Heart left ventricle (tissue), 16 donors: ENCODE measurements at regions of chr11 and their contacts with region 1.

Region 1: GRCh38 chr11:46238967-46239800 is 38.3 kb upstream of the CREB3L1 start:
- DNase-seq: peak; percentile 88 to 95 (median 89)
- ATAC-seq: peak; percentile 77 to 87 (median 84)
- H3K4me3 ChIP-seq: peak overlapping the region in 11 of 12 donors; percentile 32 to 67 (median 59)
- H3K27ac ChIP-seq: peak overlapping the region; percentile 84 to 96 (median 92)
- H3K4me1 ChIP-seq: peaks cover 3 to 50% (median 26%) of the 10 kb centered on the region in 12 donors
- H3K27me3 ChIP-seq: no peaks in the 10 kb centered on the region
- CTCF ChIP-seq: peak; percentile 98 to 100 (median 99)
- POLR2A ChIP-seq: peak in 1 of 2 donors; percentile 40

Region 2: GRCh38 chr11:45964911-45965389 is 274.2 kb before region 1 on chr11:
- intact Hi-C with region 1: loop called in 2 of 10 experiments (anchors 10 kb)
- DNase-seq: peak in 4 of 5 donors; percentile 35 to 63 (median 52)
- ATAC-seq: peak; percentile 68 to 93 (median 88)
- H3K4me3 ChIP-seq: no peak overlapping the region
- H3K27ac ChIP-seq: peak overlapping the region in 2 of 12 donors; percentile 13
- H3K4me1 ChIP-seq: peaks cover 0 to 18% (median 4%) of the 10 kb centered on the region in 12 donors
- H3K27me3 ChIP-seq: no peaks in the 10 kb centered on the region
- CTCF ChIP-seq: peak; percentile 86 to 97 (median 89)
- POLR2A ChIP-seq: no peak

Region 3: DNA sequence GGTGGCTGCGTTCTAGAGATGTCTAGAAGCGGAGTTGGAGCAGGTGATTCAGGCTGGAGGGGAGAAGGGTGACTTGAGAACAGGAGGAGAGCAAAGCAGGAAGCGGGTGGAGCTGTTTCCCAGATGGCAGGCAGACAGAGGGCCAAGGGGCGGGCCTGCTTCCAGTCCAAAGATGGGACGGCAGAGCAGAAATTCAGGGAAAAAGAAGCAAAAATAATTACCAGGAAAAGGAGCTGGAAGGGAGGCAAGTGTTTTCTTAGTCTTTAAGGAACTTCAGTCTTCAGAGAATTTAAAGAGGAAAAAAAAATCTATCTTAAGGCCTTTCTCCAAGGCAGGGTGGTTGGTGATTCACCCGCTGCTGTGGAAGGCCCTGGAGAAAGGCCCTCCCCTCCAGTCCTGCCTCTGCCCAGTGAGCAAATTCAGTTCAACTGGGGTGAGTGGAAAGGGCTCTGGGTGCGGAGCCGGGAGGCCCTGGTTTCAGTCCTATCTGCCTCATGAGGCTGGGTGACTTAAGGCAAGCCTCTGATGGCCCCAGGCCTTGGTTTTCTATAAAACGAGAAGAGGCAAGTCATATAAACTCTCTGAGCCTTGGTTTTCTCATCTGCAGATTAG is 33.7 kb after region 1 on chr11:
- intact Hi-C with region 1: loop called in 6 of 10 experiments (anchors 2 to 5 kb)
- DNase-seq: peak; percentile 70 to 83 (median 74)
- ATAC-seq: peak; percentile 39 to 81 (median 70)
- H3K4me3 ChIP-seq: peak overlapping the region in 1 of 12 donors; percentile 1
- H3K27ac ChIP-seq: peak overlapping the region; percentile 66 to 84 (median 79)
- H3K4me1 ChIP-seq: peaks cover 9 to 69% (median 50%) of the 10 kb centered on the region in 12 donors
- H3K27me3 ChIP-seq: peaks cover 0 to 13% (median 0%) of the 10 kb centered on the region in 9 donors
- CTCF ChIP-seq: no peak
- POLR2A ChIP-seq: no peak

Region 4: DNA sequence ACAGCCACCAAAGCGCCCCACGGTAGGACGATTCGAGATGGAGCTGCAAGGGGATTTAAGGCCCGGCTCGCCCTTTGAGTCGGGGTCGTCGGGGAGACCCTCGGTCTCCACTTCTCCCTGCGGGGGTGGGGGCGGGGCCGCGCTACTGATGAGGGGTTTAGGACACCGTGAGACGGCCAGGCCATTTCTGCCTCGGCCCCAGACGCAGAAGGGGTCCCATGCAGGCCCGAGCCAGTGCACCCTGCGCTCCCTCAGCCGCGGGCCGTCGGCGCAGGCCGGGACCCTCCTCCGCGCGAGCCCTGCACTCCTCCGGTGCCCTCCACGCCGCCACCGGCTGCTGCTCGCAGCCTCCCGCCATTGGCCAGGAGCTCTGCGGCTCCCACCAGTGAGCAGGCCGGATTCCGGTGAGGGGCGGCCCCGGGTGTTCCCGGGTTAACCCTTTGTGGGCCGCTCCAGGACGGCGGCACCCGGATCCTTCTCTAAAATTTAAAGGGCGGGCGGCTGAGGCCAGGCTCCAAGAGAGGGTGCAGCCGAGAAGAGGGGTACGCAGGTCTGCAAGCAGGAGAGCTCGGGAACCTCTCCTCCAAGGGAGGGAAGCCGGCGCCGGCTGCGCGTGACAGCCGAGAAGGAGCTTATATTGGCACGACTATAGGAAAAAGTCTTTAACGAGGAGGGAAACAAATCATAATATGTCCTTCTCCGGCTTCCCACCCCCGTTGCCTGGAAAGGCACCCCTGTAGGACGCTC is 56.3 kb after region 1 on chr11:
- intact Hi-C with region 1: loop called in 1 of 10 experiments (anchors 5 kb)
- DNase-seq: peak; percentile 81 to 89 (median 87)
- ATAC-seq: peak; percentile 87 to 94 (median 92)
- H3K4me3 ChIP-seq: peak overlapping the region; percentile 31 to 77 (median 58)
- H3K27ac ChIP-seq: peak overlapping the region in 11 of 12 donors; percentile 5 to 70 (median 56)
- H3K4me1 ChIP-seq: peaks cover 0 to 55% (median 32%) of the 10 kb centered on the region in 12 donors
- H3K27me3 ChIP-seq: peaks cover 0 to 25% (median 0%) of the 10 kb centered on the region in 9 donors
- CTCF ChIP-seq: no peak
- POLR2A ChIP-seq: peak in 1 of 2 donors; percentile 25

Region 5: GRCh38 chr11:46367244-46367915 is 128.2 kb after region 1 on chr11:
- intact Hi-C with region 1: loop called in 1 of 10 experiments (anchors 5 kb)
- DNase-seq: peak; percentile 68 to 87 (median 74)
- ATAC-seq: peak; percentile 27 to 59 (median 36)
- H3K4me3 ChIP-seq: peak overlapping the region in 1 of 12 donors; percentile 7
- H3K27ac ChIP-seq: peak overlapping the region in 5 of 12 donors; percentile 0 to 46 (median 24)
- H3K4me1 ChIP-seq: peaks cover 10 to 55% (median 42%) of the 10 kb centered on the region in 12 donors
- H3K27me3 ChIP-seq: no peaks in the 10 kb centered on the region
- CTCF ChIP-seq: peak; percentile 88 to 96 (median 92)
- POLR2A ChIP-seq: no peak